WTC11 (cell line): ENCODE measurements at regions of chr15 and their contacts with region 1.

Region 1: GRCh38 chr15:51162865-51163762 is 68.4 kb upstream of the TNFAIP8L3 start:
- DNase-seq: peak; percentile 76
- ATAC-seq: peak; percentile 93
- H3K4me3 Mint-ChIP-seq: no peak overlapping the region
- H3K27ac Mint-ChIP-seq: no peak overlapping the region
- H3K4me1 Mint-ChIP-seq: peaks cover 11% of the 10 kb centered on the region
- H3K27me3 Mint-ChIP-seq: no peaks in the 10 kb centered on the region
- CTCF ChIP-seq: peak; percentile 91

Region 2: DNA sequence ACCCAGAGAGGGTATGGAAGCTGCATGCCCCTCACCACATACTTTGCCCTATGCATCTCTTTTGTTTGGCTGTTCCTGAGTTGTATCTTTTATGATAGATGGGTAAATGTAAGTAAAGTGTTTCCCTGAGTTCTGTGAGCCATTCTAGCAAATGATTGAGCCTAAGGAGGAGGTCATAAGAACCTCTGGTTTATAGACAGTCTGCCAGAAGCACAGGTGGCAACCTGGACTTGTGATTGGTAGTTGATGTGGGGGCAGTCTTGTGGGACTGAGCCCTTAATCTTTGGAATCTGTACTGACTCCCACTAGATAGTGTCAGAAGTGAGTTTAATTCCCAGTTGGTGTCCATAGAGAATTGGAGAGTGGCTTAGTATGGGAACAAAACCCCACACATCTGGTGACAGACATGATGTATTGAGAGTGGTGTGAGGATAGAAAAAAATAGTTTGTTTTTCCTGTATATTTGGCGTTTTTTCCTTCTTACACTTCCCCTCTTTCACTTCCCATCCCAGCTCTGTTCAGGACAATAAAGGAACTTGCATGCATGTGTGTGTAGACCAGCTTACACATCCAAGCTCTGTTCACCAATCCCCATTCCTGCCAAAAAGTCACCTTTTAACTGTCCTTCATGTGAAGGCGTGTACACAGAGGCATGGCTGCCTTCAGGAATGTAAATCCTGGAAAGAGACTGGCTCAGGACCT is 359.5 kb before region 1 on chr15:
- CTCF ChIA-PET with region 1: no interaction called
- POLR2A ChIA-PET with region 1: no interaction called
- DNase-seq: no peak
- ATAC-seq: no peak
- H3K4me3 Mint-ChIP-seq: no peak overlapping the region
- H3K27ac Mint-ChIP-seq: no peak overlapping the region
- H3K4me1 Mint-ChIP-seq: peaks cover under 1% of the 10 kb centered on the region; the same call in 1 of the 2 replicates
- H3K27me3 Mint-ChIP-seq: no peaks in the 10 kb centered on the region
- CTCF ChIP-seq: no peak

Region 3: GRCh38 chr15:51046799-51047482 is 116.2 kb before region 1 on chr15:
- CTCF ChIA-PET with region 1: no interaction called
- POLR2A ChIA-PET with region 1: no interaction called
- DNase-seq: no peak
- ATAC-seq: no peak; the same call in 1 of the 2 replicates
- H3K4me3 Mint-ChIP-seq: no peak overlapping the region
- H3K27ac Mint-ChIP-seq: no peak overlapping the region; the same call in 1 of the 2 replicates
- H3K4me1 Mint-ChIP-seq: peaks cover 53% of the 10 kb centered on the region
- H3K27me3 Mint-ChIP-seq: no peaks in the 10 kb centered on the region
- CTCF ChIP-seq: no peak

Region 4: DNA sequence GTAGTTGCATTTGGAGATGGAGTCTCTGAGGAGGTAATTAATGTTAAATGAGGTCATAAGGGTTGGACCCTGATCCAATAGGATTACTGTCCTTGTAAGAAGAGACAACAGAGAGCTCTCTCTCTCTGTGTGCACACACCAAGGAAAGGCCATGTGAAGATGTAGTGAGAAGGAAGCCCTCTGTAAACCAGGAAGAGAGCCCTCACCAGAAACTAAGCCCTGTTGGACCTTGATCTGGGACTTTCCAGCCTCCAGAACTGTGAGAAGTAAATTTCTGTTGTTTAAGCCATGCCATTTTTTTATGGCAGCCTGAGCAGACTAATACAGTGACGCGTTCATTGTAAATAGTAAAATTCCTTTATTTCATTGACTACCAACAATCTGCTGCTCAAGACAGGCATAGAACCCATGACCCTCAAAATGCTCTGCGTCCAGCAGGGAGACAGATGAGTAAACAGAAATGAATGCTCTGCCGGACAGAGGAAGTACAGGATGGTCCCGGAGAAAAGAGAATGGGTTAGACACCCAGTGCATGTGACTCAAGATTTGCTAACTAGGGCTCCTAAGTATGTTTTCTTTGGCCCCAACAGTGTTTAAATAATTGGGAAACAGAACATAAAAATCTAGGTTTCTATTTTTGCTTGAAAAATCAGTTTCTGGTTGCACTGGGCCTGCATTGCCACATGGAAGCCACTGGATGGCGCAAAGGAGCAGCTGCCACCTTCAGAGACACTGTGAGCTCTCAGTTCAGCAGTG is 30.6 kb before region 1 on chr15:
- CTCF ChIA-PET with region 1: interaction called, 40 read pairs
- POLR2A ChIA-PET with region 1: no interaction called
- DNase-seq: peak; percentile 56
- ATAC-seq: peak; percentile 92
- H3K4me3 Mint-ChIP-seq: no peak overlapping the region
- H3K27ac Mint-ChIP-seq: peak overlapping the region; percentile 16; the same call in 1 of the 2 replicates
- H3K4me1 Mint-ChIP-seq: peaks cover 9% of the 10 kb centered on the region
- H3K27me3 Mint-ChIP-seq: no peaks in the 10 kb centered on the region
- CTCF ChIP-seq: peak; percentile 89

Region 5: DNA sequence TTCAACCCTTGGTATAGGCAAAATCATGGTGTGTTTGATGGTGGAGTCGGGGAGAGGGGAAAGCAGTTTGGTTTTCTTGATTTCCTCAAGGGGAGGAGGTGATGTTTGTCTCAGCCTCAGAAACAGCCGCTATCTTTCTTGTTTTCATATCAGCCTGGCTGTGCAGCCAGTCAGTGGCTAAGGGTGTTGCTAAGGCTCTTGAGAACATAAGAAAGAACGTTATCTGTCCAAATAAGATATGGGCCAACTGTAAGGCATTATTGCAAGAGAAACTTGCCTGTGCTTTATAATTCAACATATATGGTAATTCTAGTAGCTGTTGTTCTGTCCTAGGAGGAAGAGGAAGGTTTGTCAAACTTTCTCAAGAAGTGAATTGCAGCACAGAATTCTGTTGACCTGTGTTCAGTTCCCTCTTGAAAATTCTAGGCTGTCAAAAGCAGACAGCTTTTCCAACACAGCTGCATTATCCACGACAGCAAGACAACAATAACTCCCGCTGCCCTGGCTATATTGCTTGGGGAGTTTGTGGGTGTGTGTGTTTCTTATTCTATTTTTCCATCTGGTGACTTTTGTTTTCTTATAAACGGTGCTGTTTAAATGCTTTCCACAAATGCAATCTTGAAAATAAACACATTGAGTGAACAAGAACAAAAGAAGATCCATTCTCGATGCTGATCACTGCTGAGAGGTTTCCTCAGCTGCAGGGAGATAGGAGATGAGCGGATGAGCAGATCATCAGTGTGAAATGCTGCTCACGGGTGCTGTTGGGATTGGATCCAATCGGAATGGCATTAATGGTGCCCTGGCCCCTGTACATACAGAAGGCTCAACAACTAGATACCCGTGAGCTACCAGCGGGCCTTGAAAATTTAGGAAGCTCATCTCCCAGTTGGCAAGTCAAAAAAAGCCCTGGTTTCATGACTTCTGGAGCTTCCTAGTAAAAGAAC is 22.4 kb after region 1 on chr15:
- CTCF ChIA-PET with region 1: interaction called, 20 read pairs
- POLR2A ChIA-PET with region 1: no interaction called
- DNase-seq: no peak
- ATAC-seq: no peak
- H3K4me3 Mint-ChIP-seq: no peak overlapping the region
- H3K27ac Mint-ChIP-seq: no peak overlapping the region
- H3K4me1 Mint-ChIP-seq: no peaks in the 10 kb centered on the region
- H3K27me3 Mint-ChIP-seq: no peaks in the 10 kb centered on the region; the same call in 1 of the 2 replicates
- CTCF ChIP-seq: no peak

Region 6: GRCh38 chr15:51198701-51199232 is 35.7 kb after region 1 on chr15:
- CTCF ChIA-PET with region 1: interaction called, 103 read pairs
- POLR2A ChIA-PET with region 1: interaction called, 4 read pairs
- DNase-seq: no peak
- ATAC-seq: peak; percentile 65
- H3K4me3 Mint-ChIP-seq: no peak overlapping the region
- H3K27ac Mint-ChIP-seq: no peak overlapping the region
- H3K4me1 Mint-ChIP-seq: no peaks in the 10 kb centered on the region
- H3K27me3 Mint-ChIP-seq: no peaks in the 10 kb centered on the region
- CTCF ChIP-seq: no peak

Region 7: DNA sequence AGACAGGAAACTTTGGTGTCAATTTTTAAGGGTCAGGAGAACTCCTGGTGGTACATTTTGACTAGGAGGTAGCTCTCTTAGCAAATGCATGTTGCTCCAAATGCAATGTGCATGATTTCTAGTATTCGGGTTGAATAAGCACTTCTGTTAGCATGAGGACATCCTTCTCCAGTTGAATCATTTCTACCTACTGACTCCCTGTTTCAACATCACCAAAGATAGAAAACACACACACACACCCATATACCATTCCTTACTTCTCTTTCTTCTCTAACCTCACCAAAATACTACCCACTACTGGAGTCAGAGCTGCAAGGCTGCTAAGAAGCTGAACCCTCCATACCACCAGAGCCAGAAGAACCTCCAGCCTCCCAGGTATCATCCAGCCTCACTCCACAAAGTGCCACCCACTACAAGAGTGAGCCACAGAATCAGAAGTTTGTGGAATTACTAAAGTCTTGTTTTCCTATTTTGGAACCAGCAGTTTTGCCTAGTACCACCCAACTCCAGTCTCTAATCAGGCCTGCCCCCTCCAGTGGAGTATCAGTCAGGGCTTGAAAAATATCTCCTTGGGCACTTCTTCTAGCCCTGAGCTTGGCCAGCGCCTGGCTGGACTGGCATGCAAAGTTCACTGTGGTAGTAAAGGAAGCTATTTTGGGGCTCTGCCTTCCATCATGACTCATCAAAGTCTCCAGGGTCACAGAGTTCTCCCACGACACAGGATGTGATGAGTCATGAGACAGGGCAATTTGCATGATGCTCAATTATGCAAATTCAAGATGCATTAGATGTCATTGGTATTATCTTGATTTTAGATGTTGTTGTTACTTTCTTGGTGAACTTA is 65.0 kb after region 1 on chr15:
- CTCF ChIA-PET with region 1: interaction called, 35 read pairs
- POLR2A ChIA-PET with region 1: no interaction called
- DNase-seq: no peak
- ATAC-seq: peak; percentile 42
- H3K4me3 Mint-ChIP-seq: no peak overlapping the region
- H3K27ac Mint-ChIP-seq: peak overlapping the region; percentile 2
- H3K4me1 Mint-ChIP-seq: peaks cover 10% of the 10 kb centered on the region
- H3K27me3 Mint-ChIP-seq: no peaks in the 10 kb centered on the region
- CTCF ChIP-seq: no peak

Region 8: GRCh38 chr15:51281368-51281967 is 118.4 kb after region 1 on chr15:
- CTCF ChIA-PET with region 1: interaction called, 19 read pairs
- POLR2A ChIA-PET with region 1: interaction called, 3 read pairs
- DNase-seq: peak; percentile 80
- ATAC-seq: peak; percentile 99
- H3K4me3 Mint-ChIP-seq: no peak overlapping the region
- H3K27ac Mint-ChIP-seq: no peak overlapping the region
- H3K4me1 Mint-ChIP-seq: no peaks in the 10 kb centered on the region
- H3K27me3 Mint-ChIP-seq: no peaks in the 10 kb centered on the region; the same call in 1 of the 2 replicates
- CTCF ChIP-seq: peak; percentile 58

Region 9: DNA sequence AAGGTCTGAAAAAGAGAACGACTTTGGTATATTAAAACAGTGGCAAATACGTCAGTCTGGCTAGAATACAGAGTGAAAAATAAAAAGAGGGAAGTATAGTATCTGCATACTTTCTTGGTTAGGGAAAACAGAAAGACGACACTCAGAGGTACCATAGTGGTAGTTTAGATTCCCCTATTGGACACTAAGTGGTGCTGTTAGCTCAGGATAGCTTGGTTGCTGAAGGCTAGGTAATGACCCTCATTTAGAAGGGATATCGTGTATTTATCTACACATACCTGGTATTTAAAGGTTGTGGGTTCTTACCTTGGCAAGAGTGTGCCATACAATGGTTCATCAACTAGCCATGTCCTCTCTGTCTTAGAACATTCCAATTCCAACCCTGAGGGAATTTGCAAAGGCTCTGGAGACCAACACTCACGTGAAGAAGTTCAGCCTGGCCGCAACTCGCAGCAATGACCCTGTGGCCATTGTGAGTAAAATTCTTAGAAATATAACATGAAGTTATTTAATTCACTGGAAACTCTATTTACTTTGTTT is 619.3 kb after region 1 on chr15:
- CTCF ChIA-PET with region 1: no interaction called
- POLR2A ChIA-PET with region 1: no interaction called
- DNase-seq: no peak
- ATAC-seq: peak; percentile 92
- H3K4me3 Mint-ChIP-seq: no peak overlapping the region
- H3K27ac Mint-ChIP-seq: no peak overlapping the region
- H3K4me1 Mint-ChIP-seq: peaks cover 11% of the 10 kb centered on the region
- H3K27me3 Mint-ChIP-seq: no peaks in the 10 kb centered on the region
- CTCF ChIP-seq: peak; percentile 23